MCF 10A (cell line): ENCODE measurements at regions of chr22 and their contacts with region 1.

Region 1: GRCh38 chr22:19730655-19731360 is 7.5 kb downstream of the GP1BB start:
- DNase-seq: peak; percentile 76
- H3K4me3 Mint-ChIP-seq: peak overlapping the region; percentile 70
- H3K27ac Mint-ChIP-seq: no peak overlapping the region
- H3K4me1 Mint-ChIP-seq: no peaks in the 10 kb centered on the region
- H3K27me3 Mint-ChIP-seq: no peaks in the 10 kb centered on the region
- CTCF ChIP-seq: peak; percentile 97

Region 2: DNA sequence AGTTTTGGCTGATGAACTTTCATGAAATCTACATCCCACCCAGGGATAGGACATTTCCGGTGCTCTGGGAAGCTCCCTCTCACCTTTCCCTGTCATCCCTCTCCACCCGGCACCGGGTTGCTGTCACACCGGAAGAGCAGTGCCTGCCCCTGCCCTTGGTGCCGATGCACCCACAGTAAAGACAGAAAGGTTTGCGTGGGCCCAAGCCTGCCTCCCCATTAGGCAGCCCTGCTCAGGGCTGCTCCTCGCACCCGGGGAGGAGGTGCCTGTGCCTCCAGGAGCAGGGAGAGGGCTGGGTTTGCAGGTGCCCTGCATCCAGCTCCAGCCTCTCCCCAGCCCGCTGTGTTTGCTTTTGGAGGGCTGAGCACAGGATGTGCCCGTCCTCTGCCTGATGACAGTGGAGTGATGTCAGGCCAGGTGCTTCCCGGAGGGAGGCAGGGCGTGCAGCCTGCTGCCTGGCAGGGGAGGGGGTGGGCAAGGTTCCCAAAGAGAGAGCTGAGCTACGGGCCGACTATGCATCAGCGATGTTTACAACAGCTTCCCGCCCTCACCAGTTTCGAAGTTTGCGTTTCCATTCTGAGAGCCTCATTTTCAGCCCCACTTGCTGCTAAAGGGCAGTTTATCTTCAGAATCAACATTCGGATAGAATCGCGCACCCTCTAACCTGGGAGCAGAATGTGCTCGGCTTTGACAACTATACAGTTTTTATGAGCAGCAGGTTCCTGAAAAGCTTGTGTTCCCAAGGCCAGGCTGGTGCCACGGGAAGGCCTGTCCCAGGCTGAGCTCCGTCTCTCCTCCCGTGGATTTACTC is 123.4 kb before region 1 on chr22:
- CTCF ChIA-PET with region 1: no interaction called
- POLR2A ChIA-PET with region 1: no interaction called
- intact Hi-C with region 1: no loop called
- DNase-seq: peak; percentile 71
- H3K4me3 Mint-ChIP-seq: no peak overlapping the region
- H3K27ac Mint-ChIP-seq: peak overlapping the region; percentile 51
- H3K4me1 Mint-ChIP-seq: peaks cover 13% of the 10 kb centered on the region
- H3K27me3 Mint-ChIP-seq: no peaks in the 10 kb centered on the region
- CTCF ChIP-seq: no peak

Region 3: DNA sequence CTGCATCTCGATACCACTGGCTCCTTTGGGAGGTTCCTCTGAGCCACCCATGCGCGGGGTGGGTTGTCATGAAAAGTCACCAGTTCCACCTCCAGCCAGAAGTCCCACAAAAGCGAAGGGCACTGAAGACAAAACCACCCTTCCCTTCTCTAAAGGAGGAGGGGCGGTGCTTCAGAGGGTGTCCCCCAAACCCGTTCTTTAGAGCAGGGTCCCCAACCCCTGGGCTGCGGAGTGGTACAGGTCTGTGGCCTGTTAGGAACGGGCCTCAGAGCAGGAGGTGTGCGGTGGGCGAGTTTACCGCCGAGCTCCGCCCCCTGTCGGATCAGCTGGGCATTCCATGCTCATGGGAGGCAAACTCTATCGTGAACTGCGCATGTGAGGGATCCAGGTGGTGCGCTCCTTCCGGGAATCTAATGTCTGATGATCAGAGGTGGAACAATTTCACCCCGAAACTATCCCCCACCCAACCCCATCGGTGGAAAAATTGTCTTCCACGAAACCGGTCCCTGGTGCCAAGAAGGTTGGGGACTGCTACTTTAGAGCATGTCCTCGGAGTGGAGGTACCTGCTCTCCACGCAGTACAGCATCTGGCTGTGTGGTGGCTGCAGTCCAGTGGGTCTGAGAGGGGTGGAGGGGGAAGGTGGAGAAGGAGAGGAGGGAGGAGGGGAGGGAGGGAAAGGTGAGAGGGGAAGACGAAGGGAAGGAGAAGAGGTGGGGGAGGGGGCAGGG is 89.4 kb before region 1 on chr22:
- CTCF ChIA-PET with region 1: no interaction called
- POLR2A ChIA-PET with region 1: no interaction called
- intact Hi-C with region 1: no loop called
- DNase-seq: no peak
- H3K4me3 Mint-ChIP-seq: no peak overlapping the region
- H3K27ac Mint-ChIP-seq: no peak overlapping the region
- H3K4me1 Mint-ChIP-seq: no peaks in the 10 kb centered on the region
- H3K27me3 Mint-ChIP-seq: no peaks in the 10 kb centered on the region
- CTCF ChIP-seq: peak; percentile 22

Region 4: GRCh38 chr22:19679522-19680101 is 51.2 kb before region 1 on chr22:
- CTCF ChIA-PET with region 1: no interaction called
- POLR2A ChIA-PET with region 1: no interaction called
- intact Hi-C with region 1: no loop called
- DNase-seq: peak; percentile 11
- H3K4me3 Mint-ChIP-seq: no peak overlapping the region
- H3K27ac Mint-ChIP-seq: no peak overlapping the region
- H3K4me1 Mint-ChIP-seq: peaks cover under 1% of the 10 kb centered on the region
- H3K27me3 Mint-ChIP-seq: peaks cover 53% of the 10 kb centered on the region
- CTCF ChIP-seq: peak; percentile 67

Region 5: DNA sequence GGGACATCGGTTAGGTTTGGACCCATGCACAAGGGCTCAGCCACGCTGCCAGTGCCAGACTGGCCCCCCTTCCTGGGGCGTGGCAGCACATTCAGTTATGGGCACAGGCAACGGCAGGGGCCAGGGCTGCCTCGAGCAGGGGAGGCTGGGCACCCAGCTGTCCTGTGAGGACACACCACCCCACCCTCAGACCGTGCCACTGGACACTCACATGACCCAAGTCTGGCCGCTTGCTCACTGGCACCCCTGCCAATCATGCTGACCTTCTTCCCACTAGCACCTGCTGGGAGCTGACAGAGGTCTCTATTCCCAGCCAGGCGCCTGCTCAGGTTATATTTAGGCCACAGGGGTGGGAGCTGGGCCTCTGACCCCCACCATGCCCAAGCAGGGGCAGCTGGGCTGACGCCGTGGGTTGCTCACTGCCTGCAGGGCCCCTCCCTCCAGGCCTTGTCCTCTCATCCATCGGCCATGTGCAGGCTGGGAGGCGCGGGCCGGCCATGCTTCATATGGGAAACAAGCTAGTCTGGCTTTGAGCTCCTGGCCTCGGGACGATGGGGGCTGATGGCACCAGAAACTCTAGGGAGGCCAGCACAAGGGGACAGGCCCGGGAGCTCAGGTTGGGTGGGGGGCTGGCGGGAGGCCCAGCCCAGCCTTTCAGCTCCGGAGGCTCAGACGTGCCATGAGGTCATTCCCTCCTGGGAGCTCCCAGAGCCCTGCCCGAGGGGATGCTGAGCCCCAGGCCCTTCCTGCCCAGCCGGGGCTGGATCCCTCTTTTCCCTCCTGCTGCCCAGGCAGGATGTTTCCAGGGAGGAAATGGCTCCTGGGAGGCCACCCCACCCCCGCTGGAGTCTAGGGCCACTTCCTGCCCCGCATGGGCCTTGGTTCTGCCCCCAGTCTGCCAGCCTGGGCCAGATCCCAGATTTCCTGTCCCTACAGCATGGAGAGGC is 14.6 kb after region 1 on chr22:
- CTCF ChIA-PET with region 1: interaction called, 26 read pairs
- POLR2A ChIA-PET with region 1: no interaction called
- intact Hi-C with region 1: no loop called
- DNase-seq: no peak
- H3K4me3 Mint-ChIP-seq: no peak overlapping the region
- H3K27ac Mint-ChIP-seq: no peak overlapping the region
- H3K4me1 Mint-ChIP-seq: no peaks in the 10 kb centered on the region
- H3K27me3 Mint-ChIP-seq: no peaks in the 10 kb centered on the region
- CTCF ChIP-seq: no peak

Region 6: GRCh38 chr22:19896665-19897355 is 166.0 kb after region 1 on chr22:
- CTCF ChIA-PET with region 1: interaction called, 19 read pairs
- POLR2A ChIA-PET with region 1: no interaction called
- intact Hi-C with region 1: no loop called
- DNase-seq: no peak
- H3K4me3 Mint-ChIP-seq: no peak overlapping the region
- H3K27ac Mint-ChIP-seq: no peak overlapping the region
- H3K4me1 Mint-ChIP-seq: peaks cover 10% of the 10 kb centered on the region
- H3K27me3 Mint-ChIP-seq: no peaks in the 10 kb centered on the region
- CTCF ChIP-seq: no peak

Region 7: DNA sequence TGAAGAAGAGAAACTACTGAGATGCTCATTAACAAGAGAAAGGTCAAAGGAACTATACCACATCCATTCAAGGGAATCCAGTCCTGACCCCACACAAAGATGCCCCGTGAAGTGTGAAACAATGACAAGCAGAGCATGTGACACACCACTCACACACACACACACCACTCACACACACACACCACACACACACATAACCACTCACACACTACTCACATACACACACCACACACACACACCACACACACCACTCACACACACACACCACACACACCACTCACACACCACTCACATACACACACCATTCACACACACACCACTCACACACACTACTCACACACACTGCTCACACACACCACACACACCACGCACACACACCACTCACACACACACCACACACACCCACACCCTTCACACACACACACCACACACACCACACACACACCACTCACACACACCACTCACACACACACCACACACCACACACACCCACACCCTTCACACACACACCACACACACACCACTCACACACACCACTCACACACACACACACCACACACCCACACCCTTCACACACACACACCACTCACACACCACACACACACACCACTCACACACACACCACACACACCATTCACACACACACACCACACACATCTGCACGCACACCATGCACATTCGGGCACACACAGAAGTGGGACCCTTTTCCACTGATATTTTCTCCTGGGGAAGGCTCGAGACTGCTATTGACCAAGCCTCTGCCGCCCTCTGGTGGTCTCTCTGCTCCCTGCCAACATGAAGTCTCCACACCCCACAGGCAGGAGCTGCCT is 178.8 kb after region 1 on chr22:
- CTCF ChIA-PET with region 1: interaction called, 76 read pairs
- POLR2A ChIA-PET with region 1: interaction called, 4 read pairs
- intact Hi-C with region 1: loop called (anchors 1 kb)
- DNase-seq: peak; percentile 75
- H3K4me3 Mint-ChIP-seq: no peak overlapping the region
- H3K27ac Mint-ChIP-seq: peak overlapping the region; percentile 5
- H3K4me1 Mint-ChIP-seq: peaks cover 6% of the 10 kb centered on the region
- H3K27me3 Mint-ChIP-seq: no peaks in the 10 kb centered on the region
- CTCF ChIP-seq: peak; percentile 73